ENCODE measurements at regions of chr9 and their contacts with region 1.

Region 1: GRCh38 chr9:12884737-12885414 is 110.1 kb downstream of the LURAP1L start:
- DNase-seq: no peak

Region 2: GRCh38 chr9:12775679-12776512 is 109.0 kb before region 1 on chr9:
- intact Hi-C with region 1: loop called (anchors 2 kb)
- DNase-seq: peak; percentile 41 to 94 (median 60)

Region 3: GRCh38 chr9:13110766-13111417 is 226.0 kb after region 1 on chr9:
- intact Hi-C with region 1: no loop called
- DNase-seq: peak in 3 of 10 donors; percentile 26 to 60 (median 50)

Measured in posterior cingulate gyrus (tissue), 11 donors.